ENCODE measurements at regions of chr20 and their contacts with region 1.

Region 1: GRCh38 chr20:16569246-16570153 is 3.7 kb downstream of the KIF16B start:
- DNase-seq: peak; percentile 68
- H3K4me3 ChIP-seq: no peak overlapping the region
- H3K27ac ChIP-seq: peak overlapping the region; percentile 52
- H3K4me1 ChIP-seq: no peaks in the 10 kb centered on the region
- H3K27me3 ChIP-seq: no peaks in the 10 kb centered on the region
- CTCF ChIP-seq: no peak

Region 2: GRCh38 chr20:16530201-16530681 is 39.3 kb before region 1 on chr20:
- intact Hi-C with region 1: loop called (anchors 5 kb)
- DNase-seq: peak; percentile 88
- H3K4me3 ChIP-seq: no peak overlapping the region
- H3K27ac ChIP-seq: peak overlapping the region; percentile 74
- H3K4me1 ChIP-seq: no peaks in the 10 kb centered on the region
- H3K27me3 ChIP-seq: no peaks in the 10 kb centered on the region
- CTCF ChIP-seq: no peak

Region 3: DNA sequence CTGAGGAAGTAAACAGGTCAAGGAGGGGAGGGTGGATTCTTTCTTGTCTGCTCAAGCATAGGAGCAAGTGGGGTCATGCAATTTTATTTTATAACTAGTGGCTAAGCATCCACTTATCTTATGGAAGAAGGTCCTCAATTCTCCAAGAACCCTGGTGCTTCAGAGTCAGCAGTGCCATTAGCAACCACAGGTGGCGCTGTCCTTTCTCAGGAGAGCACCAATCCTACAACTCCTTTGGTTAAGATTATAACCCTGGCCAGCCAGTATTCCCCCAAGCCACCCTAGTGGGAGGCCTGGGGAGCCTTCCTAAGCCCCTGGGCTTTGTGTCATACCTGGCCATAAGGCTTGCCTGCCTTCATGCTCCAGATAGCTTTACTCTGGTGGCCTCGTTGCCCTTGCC is 718.0 kb after region 1 on chr20:
- intact Hi-C with region 1: no loop called
- DNase-seq: no peak
- H3K4me3 ChIP-seq: no peak overlapping the region
- H3K27ac ChIP-seq: no peak overlapping the region
- H3K4me1 ChIP-seq: no peaks in the 10 kb centered on the region
- H3K27me3 ChIP-seq: no peaks in the 10 kb centered on the region
- CTCF ChIP-seq: no peak